PC-9 (cell line): ENCODE measurements at regions of chrX and their contacts with region 1.

Region 1: DNA sequence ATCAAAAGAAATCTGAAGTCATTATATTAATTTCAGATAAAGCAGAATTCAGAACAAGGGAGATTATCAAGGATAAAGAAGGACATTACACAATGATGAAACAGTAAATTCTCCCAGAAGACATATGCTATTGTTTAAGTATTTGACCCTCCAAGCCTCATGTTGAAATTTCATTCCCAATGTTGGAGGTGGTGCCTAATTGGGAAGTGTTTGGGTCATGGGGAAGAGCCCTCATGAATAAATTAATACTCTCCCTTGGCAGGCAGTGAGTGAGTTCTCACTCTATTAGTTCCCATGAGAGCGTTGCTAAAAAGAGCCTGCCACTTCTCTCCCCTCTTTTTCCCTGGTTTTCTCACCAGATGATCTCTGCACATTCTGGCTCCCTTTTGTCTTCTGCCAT is 249.9 kb upstream of the GRIA3 start:
- DNase-seq: no peak
- H3K4me3 ChIP-seq: no peak overlapping the region
- H3K27ac ChIP-seq: no peak overlapping the region
- H3K4me1 ChIP-seq: no peaks in the 10 kb centered on the region
- H3K27me3 ChIP-seq: no peaks in the 10 kb centered on the region
- CTCF ChIP-seq: no peak

Region 2: DNA sequence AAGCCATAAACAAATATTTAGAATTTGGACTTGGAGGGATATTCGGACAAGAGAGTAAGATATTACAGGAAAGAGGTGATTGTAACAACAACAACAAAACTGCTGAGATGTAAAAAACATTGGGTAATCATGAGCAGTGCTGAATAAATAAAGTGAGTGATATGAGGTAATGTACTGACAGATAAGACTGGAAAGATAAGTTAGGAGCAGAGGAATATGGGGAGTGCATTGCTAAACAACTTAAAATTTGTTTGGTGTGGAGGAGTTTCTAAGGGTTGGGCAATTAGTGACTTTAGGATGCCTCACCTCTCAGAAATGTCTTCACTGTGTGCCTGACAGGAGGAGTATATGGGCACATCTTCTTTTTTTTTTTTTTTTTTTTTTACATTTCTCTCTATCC is 387.9 kb before region 1 on chrX:
- CTCF ChIA-PET with region 1: no interaction called
- POLR2A ChIA-PET with region 1: no interaction called
- intact Hi-C with region 1: no loop called
- DNase-seq: no peak
- H3K4me3 ChIP-seq: no peak overlapping the region
- H3K27ac ChIP-seq: no peak overlapping the region
- H3K4me1 ChIP-seq: no peaks in the 10 kb centered on the region
- H3K27me3 ChIP-seq: no peaks in the 10 kb centered on the region
- CTCF ChIP-seq: no peak

Region 3: DNA sequence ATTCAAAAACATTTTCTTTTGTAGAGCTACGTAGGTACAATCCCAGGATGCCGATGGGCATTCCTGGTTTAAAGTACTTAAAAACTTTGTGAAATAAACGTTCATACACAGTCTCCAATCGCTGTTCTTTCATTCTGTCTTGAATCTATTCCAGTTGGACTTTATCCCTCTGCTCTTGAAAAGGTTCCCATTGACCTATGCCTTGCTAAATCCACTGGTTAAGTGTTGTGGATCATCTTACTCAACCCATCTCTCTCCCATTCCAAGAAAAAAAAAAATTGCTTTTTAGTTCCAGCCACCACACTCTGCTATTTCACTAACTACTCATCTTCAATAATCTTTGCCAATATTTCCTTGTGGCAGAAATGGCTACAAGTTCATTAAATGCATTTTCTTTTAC is 292.3 kb before region 1 on chrX:
- CTCF ChIA-PET with region 1: no interaction called
- POLR2A ChIA-PET with region 1: no interaction called
- intact Hi-C with region 1: no loop called
- DNase-seq: no peak
- H3K4me3 ChIP-seq: no peak overlapping the region
- H3K27ac ChIP-seq: no peak overlapping the region
- H3K4me1 ChIP-seq: no peaks in the 10 kb centered on the region
- H3K27me3 ChIP-seq: no peaks in the 10 kb centered on the region
- CTCF ChIP-seq: no peak

Region 4: DNA sequence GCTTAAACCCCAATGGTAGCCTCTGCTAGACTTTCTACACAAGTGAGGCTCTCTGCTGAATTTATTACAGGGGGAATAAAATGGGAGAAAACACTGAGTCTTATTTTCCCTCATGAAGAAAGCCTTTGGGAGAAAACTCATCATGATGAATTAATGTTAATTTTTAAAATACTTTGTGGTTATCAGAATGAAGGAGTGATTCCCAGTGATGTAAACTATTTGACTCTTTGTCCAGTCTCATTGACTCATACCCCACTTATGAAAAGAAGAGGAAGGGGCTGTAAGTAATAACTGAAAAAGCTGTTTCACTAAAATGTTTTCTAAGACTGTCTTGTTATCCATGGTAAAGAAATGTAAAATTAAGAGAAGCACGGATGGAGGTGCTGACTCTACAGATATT is 458.8 kb after region 1 on chrX:
- CTCF ChIA-PET with region 1: no interaction called
- POLR2A ChIA-PET with region 1: no interaction called
- intact Hi-C with region 1: loop called (anchors 10 kb)
- DNase-seq: no peak
- H3K4me3 ChIP-seq: no peak overlapping the region
- H3K27ac ChIP-seq: no peak overlapping the region
- H3K4me1 ChIP-seq: no peaks in the 10 kb centered on the region
- H3K27me3 ChIP-seq: no peaks in the 10 kb centered on the region
- CTCF ChIP-seq: no peak